Cardiac septum (tissue), 1 donor: ENCODE measurements at regions of chr3 and their contacts with region 1.

Region 1: DNA sequence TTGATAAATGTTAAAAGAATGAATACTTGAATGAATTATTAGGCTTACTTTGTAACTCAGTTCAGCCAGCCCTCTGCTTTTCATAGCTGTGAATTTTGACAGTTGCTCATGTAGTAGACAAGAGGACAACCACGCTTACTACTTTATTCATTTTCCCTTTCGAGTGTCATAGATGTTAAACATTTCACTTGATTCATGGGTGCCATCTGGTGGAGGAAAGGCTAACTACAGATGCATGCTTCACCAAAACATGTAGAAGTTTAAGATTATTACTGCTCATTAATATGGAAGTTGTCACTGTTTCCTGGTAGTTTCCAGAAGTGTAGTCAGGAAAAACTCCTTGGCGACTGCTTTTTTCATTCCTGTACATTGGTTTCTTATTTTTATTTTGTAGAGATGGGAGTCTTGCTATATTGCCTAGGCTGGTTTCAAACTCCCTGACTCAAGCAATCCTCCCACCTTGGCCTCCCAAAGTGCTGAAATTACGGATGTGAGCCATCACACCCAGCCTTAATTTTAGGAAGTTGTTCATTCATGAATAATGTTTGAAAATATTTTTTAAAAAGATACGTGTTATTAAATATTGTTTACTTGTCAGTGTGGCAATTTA is 163.2 kb downstream of the B3GALNT1 start:
- DNase-seq: no peak

Region 2: DNA sequence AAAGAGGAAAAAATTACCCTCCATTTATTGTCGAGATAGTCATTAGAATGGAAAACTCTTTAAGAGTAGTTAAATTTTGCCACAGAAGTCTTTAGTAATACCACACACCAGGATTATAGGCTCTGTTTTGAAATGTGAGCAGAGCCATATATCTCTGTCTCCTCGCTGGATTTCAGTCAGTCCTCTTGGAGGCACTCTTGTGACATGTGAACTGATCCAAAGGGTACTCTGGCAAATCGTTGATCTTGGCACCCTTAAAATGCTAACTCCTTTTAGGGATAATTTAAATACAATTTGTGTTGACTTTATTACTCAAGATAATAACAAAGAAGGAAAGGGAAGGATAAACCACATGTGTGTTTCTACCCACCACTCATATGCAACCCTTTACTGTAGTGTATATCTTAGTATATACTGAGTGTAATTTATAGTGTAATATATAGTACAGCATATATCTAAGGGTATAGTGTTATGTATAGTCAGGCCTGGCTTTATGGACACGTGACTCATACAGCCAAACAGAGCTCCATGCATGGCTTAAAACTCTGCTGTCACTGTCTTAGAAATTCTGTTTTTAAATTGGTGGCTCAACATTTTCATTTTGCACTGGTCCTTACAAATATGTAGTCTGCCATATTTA is 364.3 kb before region 1 on chr3:
- intact Hi-C with region 1: loop called (anchors 5 kb)
- DNase-seq: no peak